CD14-positive monocyte (primary cell): ENCODE measurements at regions of chr1 and their contacts with region 1.

Region 1: GRCh38 chr1:112955781-112956543 is at the start of gene SLC16A1:
- DNase-seq: peak; percentile 85 to 91 (median 86)
- H3K4me3 ChIP-seq: peak within 1 kb of the TSS; percentile 58 to 90 (median 85)
- H3K4me3 Mint-ChIP-seq: peak within 1 kb of the TSS; percentile 97 to 100
- H3K27ac ChIP-seq: peak within 1 kb of the TSS; percentile 90 to 91
- H3K27ac Mint-ChIP-seq: peak within 1 kb of the TSS; percentile 90 to 98 (median 96)
- H3K4me1 ChIP-seq: peaks cover 30 to 34% of the 10 kb centered on the region in 2 donors
- H3K4me1 Mint-ChIP-seq: peaks cover 54% of the 10 kb centered on the region
- H3K27me3 ChIP-seq: no peaks in the 10 kb centered on the region
- H3K27me3 Mint-ChIP-seq: peaks cover 0 to 2% (median 0%) of the 10 kb centered on the region in 3 donors
- CTCF ChIP-seq: peak; percentile 29
- polyA plus RNA-seq, gene SLC16A1: 2.4 to 13.1 (median 10.3) TPM

Region 2: DNA sequence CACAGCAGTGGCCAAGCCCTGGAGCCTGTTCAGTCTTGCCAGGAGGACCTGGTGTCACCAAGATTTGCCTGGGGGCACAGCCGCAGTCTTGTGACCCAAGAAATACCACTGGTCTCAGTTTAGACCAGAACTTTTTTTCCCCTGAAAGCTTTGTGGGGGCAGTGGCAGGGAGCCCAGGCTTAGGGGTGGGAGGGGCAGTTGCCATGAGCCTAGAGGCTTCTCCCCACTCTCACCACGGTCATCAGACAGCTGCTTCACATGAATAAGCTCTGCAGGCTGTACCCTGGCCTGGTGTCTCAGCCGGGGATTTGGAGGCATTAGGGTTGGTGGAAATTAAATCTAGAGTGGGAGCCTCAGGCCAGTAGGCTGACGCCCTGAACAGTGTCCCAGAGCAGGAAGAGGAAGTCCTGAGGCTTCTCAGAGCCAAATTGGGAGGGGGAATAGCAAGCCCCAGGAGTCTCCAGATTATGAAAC is 73.7 kb before region 1 on chr1:
- intact Hi-C with region 1: loop called in 1 of 2 experiments (anchors 2 kb)
- DNase-seq: peak; percentile 14 to 42 (median 16)
- H3K4me3 ChIP-seq: peak overlapping the region in 1 of 3 experiments; percentile 50
- H3K4me3 Mint-ChIP-seq: peak overlapping the region; percentile 56 to 85
- H3K27ac ChIP-seq: peak overlapping the region; percentile 80 to 81
- H3K27ac Mint-ChIP-seq: peak overlapping the region; percentile 92 to 96 (median 94)
- H3K4me1 ChIP-seq: peaks cover 29 to 30% of the 10 kb centered on the region in 2 donors
- H3K4me1 Mint-ChIP-seq: peaks cover 28% of the 10 kb centered on the region
- H3K27me3 ChIP-seq: no peaks in the 10 kb centered on the region
- H3K27me3 Mint-ChIP-seq: peaks cover 4 to 10% (median 7%) of the 10 kb centered on the region in 3 donors
- CTCF ChIP-seq: no peak

Region 3: GRCh38 chr1:113072757-113073478 is 117.0 kb after region 1 on chr1 and contains the start of gene LRIG2:
- intact Hi-C with region 1: loop called in 1 of 2 experiments (anchors 10 kb)
- DNase-seq: peak; percentile 96 to 98 (median 96)
- H3K4me3 ChIP-seq: peak within 1 kb of the TSS; percentile 84 to 96 (median 85)
- H3K4me3 Mint-ChIP-seq: peak within 1 kb of the TSS; percentile 94 to 98
- H3K27ac ChIP-seq: peak within 1 kb of the TSS; percentile 86 to 95
- H3K27ac Mint-ChIP-seq: peak within 1 kb of the TSS; percentile 95 to 98 (median 97)
- H3K4me1 ChIP-seq: peaks cover 15 to 20% of the 10 kb centered on the region in 2 donors
- H3K4me1 Mint-ChIP-seq: peaks cover 30% of the 10 kb centered on the region
- H3K27me3 ChIP-seq: no peaks in the 10 kb centered on the region
- H3K27me3 Mint-ChIP-seq: no peaks in the 10 kb centered on the region
- CTCF ChIP-seq: peak; percentile 99
- polyA plus RNA-seq, gene LRIG2: 0.93 to 12.7 (median 0.96) TPM